WTC11 (cell line): ENCODE measurements at regions of chr14 and their contacts with region 1.

Region 1: DNA sequence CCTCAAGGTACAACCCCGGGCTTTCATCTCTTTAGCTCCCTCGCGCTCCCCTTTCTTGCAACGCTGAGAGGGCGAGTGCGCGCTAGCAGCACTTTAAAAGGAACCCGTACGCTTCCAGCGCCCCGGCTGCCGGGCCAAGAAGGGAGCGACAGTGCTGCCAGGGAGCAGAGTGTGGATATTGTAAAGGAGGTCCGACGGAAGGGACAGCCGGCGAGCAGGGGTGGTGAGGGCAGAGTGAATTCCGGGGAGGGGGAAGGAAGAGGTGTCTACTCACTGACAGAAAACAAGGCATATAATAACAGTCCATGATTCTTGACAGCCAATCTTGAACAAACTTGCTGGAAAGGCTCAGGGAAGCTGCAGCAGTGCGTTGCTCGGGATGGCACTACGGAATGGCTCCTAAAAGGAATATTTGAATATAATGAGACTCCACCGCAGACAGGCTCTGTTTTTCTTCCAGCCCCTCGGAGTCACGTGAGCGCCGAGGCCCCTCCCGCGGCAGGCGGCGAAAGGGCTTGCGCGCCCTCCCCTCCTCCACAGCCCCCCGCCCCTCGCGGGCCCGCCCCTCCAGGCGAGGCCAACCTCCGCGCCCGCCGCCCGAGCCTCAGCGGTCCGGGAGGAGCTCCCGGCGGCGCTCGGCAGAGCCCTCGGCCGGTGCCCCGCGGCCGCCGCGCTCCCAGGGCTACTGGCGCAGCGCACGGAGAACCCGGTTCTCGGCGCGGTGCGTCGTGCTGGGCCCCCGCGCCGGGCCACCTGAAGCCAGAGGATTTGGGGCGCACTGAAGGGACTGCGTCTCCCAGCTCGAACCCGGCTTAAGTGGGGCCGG is 3.4 kb downstream of the BMP4 start:
- DNase-seq: peak; percentile 81
- ATAC-seq: peak; percentile 33
- H3K4me3 Mint-ChIP-seq: peak overlapping the region; percentile 97
- H3K27ac Mint-ChIP-seq: peak overlapping the region; percentile 94
- H3K4me1 Mint-ChIP-seq: peaks cover 53% of the 10 kb centered on the region
- H3K27me3 Mint-ChIP-seq: peaks cover 85% of the 10 kb centered on the region
- CTCF ChIP-seq: no peak

Region 2: GRCh38 chr14:53929871-53930715 is 23.1 kb before region 1 on chr14:
- CTCF ChIA-PET with region 1: interaction called, 12 read pairs
- POLR2A ChIA-PET with region 1: no interaction called
- DNase-seq: peak; percentile 83
- ATAC-seq: peak; percentile 96
- H3K4me3 Mint-ChIP-seq: no peak overlapping the region
- H3K27ac Mint-ChIP-seq: no peak overlapping the region
- H3K4me1 Mint-ChIP-seq: peaks cover 18% of the 10 kb centered on the region
- H3K27me3 Mint-ChIP-seq: no peaks in the 10 kb centered on the region
- CTCF ChIP-seq: peak; percentile 70; the same call in 1 of the 2 replicates

Region 3: DNA sequence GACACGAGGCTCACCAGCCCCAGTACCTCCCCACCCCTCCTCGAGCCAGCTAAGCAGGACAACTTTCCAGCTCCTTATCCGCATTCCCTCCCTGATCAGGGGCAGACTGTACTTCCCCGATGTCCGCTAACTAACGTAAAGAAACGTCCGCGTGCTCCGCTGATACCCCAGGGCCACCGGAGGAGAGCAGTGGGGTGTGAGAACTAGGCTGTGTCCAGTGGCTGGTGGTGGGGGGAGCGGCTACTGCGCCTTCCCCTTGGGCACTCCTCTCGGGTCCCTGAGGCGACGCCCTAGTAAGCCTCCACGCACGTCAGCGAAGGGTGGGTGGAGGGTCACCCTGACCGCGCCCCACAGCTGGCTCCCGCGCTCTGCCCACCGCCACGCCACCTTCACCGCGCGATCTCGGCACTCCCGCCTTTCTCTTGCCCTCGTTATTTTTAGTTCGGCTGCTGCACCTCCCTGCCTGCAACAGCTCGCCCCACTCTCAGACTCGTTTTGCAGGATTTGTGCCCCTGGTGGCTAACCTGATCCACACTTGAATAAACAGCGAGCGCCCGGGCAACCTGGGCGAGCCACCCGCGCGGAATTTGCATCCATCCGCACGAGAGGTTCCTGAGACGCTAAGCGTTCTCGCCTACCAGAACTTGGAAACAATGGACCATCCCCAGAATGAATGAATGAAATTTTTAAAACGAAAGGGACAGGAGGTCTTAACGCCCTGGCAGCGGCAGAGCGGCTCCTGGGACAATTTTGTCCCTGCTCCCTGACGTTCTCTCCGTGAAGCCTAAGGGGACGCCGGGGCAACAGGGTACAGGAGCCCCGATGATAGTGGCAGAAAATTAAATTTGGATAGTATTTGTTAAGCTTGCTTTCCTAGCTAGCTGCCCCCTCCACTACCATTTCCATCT is 10.4 kb after region 1 on chr14:
- CTCF ChIA-PET with region 1: interaction called, 11 read pairs
- POLR2A ChIA-PET with region 1: no interaction called
- DNase-seq: peak; percentile 55
- ATAC-seq: peak; percentile 68
- H3K4me3 Mint-ChIP-seq: peak overlapping the region; percentile 77
- H3K27ac Mint-ChIP-seq: no peak overlapping the region
- H3K4me1 Mint-ChIP-seq: peaks cover 41% of the 10 kb centered on the region
- H3K27me3 Mint-ChIP-seq: peaks cover 74% of the 10 kb centered on the region
- CTCF ChIP-seq: no peak

Region 4: GRCh38 chr14:54094765-54095164 is 141.6 kb after region 1 on chr14:
- CTCF ChIA-PET with region 1: no interaction called
- POLR2A ChIA-PET with region 1: no interaction called
- DNase-seq: no peak
- ATAC-seq: no peak
- H3K4me3 Mint-ChIP-seq: no peak overlapping the region
- H3K27ac Mint-ChIP-seq: no peak overlapping the region
- H3K4me1 Mint-ChIP-seq: no peaks in the 10 kb centered on the region
- H3K27me3 Mint-ChIP-seq: no peaks in the 10 kb centered on the region; the same call in 1 of the 2 replicates
- CTCF ChIP-seq: no peak

Region 5: DNA sequence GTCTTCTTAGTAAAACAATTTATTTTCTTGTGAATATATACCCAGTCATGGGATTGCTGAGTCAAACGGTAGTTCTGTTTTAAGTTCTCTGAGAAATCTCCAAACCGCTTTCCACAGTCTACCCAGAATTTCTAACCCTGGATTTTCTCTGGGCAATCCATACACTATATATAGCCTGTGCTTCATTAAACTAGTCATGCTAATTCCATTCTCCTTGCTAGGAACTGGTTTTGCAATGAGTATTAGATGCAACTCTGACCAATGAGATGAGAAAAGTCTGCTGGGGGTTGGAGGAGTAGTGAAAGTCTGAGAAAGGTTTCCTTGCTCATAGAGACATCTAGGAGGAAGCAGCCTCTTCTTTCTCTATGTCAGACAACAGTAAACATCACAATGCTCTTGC is 247.5 kb after region 1 on chr14:
- CTCF ChIA-PET with region 1: no interaction called
- POLR2A ChIA-PET with region 1: no interaction called
- DNase-seq: no peak
- ATAC-seq: no peak
- H3K4me3 Mint-ChIP-seq: no peak overlapping the region
- H3K27ac Mint-ChIP-seq: no peak overlapping the region
- H3K4me1 Mint-ChIP-seq: no peaks in the 10 kb centered on the region
- H3K27me3 Mint-ChIP-seq: no peaks in the 10 kb centered on the region
- CTCF ChIP-seq: no peak